ENCODE measurements at regions of chr1 and their contacts with region 1.

Region 1: GRCh38 chr1:201895913-201896807 is 7.5 kb downstream of the SHISA4 start:
- H3K4me3 ChIP-seq: no peak overlapping the region
- H3K27ac ChIP-seq: no peak overlapping the region
- H3K4me1 ChIP-seq: no peaks in the 10 kb centered on the region
- CTCF ChIP-seq: peak; percentile 97

Region 2: DNA sequence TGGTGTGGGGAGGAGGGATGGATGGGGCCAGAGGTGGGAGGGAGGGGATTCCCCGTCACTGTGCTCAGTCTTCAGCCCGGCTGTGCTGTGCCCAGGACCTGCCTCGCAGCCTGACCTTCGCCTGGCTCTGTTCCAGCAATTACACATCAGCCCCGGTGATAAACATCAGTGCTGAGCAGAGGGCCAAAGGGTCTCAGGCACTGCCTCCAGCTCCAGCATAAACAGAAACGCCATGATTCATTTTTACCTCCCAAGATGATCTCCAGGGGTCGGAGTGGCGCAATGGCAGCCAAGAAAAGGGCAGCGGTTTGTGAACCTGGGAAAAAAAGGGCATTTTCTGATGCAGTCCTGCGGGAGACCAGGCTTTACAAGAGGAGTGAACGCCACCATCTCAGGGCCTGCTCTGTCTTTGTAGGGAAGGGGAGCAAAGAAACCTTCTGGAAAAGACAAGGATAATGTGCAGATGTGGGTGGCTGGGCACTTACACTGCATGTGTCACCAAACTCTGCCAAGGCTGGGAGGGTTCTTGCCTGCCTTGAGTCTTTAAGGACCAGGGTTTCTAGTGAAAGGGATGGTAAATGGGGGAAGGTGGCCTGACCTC is 20.6 kb after region 1 on chr1:
- CTCF ChIA-PET with region 1: interaction called, 24 read pairs
- POLR2A ChIA-PET with region 1: interaction called, 3 read pairs
- H3K4me3 ChIP-seq: no peak overlapping the region
- H3K27ac ChIP-seq: no peak overlapping the region
- H3K4me1 ChIP-seq: no peaks in the 10 kb centered on the region
- CTCF ChIP-seq: no peak

Region 3: GRCh38 chr1:201946224-201946908 is 50.2 kb after region 1 on chr1 and contains the start of gene LMOD1:
- CTCF ChIA-PET with region 1: interaction called, 31 read pairs
- POLR2A ChIA-PET with region 1: interaction called, 5 read pairs
- H3K4me3 ChIP-seq: peak within 1 kb of the TSS; percentile 47
- H3K27ac ChIP-seq: no peak within 1 kb of the TSS; the same call in 1 of the 2 replicates
- H3K4me1 ChIP-seq: no peaks in the 10 kb centered on the region
- CTCF ChIP-seq: 0 out of 2 replicates have a peak, but pooled peaks have one; percentile 17

Region 4: GRCh38 chr1:201964261-201964660 is 68.1 kb after region 1 on chr1:
- CTCF ChIA-PET with region 1: interaction called, 30 read pairs
- POLR2A ChIA-PET with region 1: interaction called, 3 read pairs
- H3K4me3 ChIP-seq: no peak overlapping the region
- H3K27ac ChIP-seq: no peak overlapping the region
- H3K4me1 ChIP-seq: no peaks in the 10 kb centered on the region
- CTCF ChIP-seq: no peak

Region 5: GRCh38 chr1:201982623-201983379 is 86.6 kb after region 1 on chr1 and contains the start of gene RNPEP:
- CTCF ChIA-PET with region 1: interaction called, 17 read pairs
- POLR2A ChIA-PET with region 1: interaction called, 10 read pairs
- H3K4me3 ChIP-seq: peak within 1 kb of the TSS; percentile 87
- H3K27ac ChIP-seq: peak within 1 kb of the TSS; percentile 96
- H3K4me1 ChIP-seq: no peaks in the 10 kb centered on the region
- CTCF ChIP-seq: peak; percentile 95

Region 6: GRCh38 chr1:202122639-202123335 is 226.6 kb after region 1 on chr1 and contains the start of gene GPR37L1:
- CTCF ChIA-PET with region 1: interaction called, 11 read pairs
- POLR2A ChIA-PET with region 1: no interaction called
- H3K4me3 ChIP-seq: no peak within 1 kb of the TSS
- H3K27ac ChIP-seq: no peak within 1 kb of the TSS
- H3K4me1 ChIP-seq: no peaks in the 10 kb centered on the region
- CTCF ChIP-seq: peak; percentile 24; the same call in 1 of the 2 replicates